K562 (cell line): ENCODE measurements at regions of chr11 and their contacts with region 1.

Region 1: DNA sequence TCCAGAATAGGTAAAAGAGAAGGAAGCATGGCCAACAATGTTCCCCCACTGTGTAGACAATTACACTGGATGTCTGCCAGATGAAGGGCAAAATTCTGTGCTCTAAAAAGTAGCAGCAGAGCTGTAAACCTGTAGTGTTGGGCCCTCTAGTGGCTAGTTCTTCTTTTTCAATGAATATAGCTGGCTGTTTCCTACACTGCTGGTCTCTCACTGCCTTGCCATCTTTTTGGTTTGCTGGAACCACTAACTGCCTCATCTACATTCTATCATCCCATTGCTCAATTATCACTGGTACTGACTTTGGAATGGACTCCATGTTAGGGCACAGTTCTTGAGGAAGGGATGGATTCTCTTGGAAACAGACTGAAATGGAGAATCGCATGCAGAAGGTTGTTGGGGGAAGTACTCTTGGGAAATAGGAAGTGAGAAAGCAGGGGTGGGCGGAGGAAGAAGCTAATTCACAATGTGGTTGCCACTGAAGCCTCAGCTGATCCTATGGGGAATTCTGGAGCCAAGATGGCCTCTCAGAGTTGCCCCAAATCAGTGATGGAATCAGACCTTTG is 17.9 kb downstream of the KCNE3 start:
- DNase-seq: peak; percentile 50 to 81 (median 58)
- ATAC-seq: peak; percentile 92
- H3K4me3 ChIP-seq: no peak overlapping the region
- H3K27ac ChIP-seq: no peak overlapping the region
- H3K4me1 ChIP-seq: no peaks in the 10 kb centered on the region; a peak in 2 of 5 replicates
- H3K27me3 ChIP-seq: no peaks in the 10 kb centered on the region; a peak in 3 of 5 replicates
- CTCF ChIP-seq: peak; percentile 75 to 93 (median 85)
- EP300 ChIP-seq: no peak
- POLR2A ChIP-seq: no peak
- RAD21 ChIP-seq: peak; percentile 86 to 94

Region 2: DNA sequence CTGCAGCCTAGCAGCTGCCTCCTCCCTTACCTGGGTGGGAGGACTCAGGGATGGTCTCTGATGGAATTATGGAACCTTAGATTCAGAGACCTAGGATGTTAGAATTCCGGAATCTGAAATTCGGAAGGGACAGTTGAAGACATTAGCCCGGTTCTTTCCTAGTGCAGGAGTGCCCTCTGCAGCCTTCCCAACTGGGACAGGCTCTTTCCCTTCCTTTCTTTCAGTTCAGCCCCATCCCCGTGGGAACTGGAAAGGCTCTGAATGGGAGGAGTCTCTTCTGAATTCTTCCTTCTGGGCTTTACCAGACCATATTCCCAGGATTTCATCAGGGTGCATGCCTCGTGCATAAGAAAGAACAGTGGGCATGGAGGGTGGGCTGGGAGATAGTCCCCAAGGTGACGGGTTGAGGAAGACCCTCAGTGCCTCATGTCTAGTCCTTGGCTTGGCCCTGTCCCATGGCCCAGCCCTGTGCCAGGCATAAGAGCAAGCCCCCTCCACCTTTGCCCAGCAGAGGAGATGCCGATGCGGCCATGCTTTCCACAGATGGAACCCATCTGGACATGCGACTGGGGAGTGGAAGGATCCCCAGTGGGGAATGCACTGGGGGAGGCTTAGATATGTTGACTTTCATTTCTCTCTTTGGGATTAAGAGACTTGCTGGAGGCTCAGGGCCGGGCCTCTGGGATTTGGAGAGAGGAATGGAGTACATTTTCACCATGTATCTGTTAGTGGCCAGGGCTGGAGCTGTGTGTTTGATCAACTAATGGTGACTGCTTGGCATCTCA is 484.2 kb before region 1 on chr11:
- CTCF ChIA-PET with region 1: interaction called, 5 read pairs
- POLR2A ChIA-PET with region 1: interaction called, 3 read pairs
- in situ Hi-C with region 1: loop called (anchors 10 kb)
- intact Hi-C with region 1: loop called (anchors 2 kb)
- DNase-seq: no peak
- ATAC-seq: no peak
- H3K4me3 ChIP-seq: no peak overlapping the region
- H3K27ac ChIP-seq: no peak overlapping the region
- H3K4me1 ChIP-seq: peaks cover 7 to 13% of the 10 kb centered on the region in 2 experiments; a peak in 3 of 5 replicates
- H3K27me3 ChIP-seq: no peaks in the 10 kb centered on the region; a peak in 1 of 5 replicates
- CTCF ChIP-seq: no peak
- EP300 ChIP-seq: no peak
- POLR2A ChIP-seq: no peak
- RAD21 ChIP-seq: no peak

Region 3: DNA sequence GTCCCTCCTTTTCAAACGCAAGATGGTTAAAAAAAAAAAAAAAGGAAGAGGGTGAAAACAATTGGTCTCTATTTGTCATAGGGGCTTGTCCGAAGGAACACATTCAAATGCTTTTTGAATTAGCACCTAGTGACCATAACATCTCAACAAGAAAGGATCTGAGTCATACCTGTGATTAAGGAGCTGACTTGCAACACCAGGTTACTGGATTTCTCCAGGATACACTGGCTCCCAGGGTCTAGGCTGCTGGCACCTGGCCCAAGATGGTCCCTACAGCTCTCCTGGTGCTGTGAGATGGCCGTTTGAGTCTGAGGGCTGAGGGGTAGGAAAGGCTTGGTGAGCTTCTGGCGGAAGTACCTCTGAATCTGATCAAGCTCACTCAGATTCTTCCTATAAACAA is 412.1 kb before region 1 on chr11:
- CTCF ChIA-PET with region 1: no interaction called
- POLR2A ChIA-PET with region 1: no interaction called
- in situ Hi-C with region 1: no loop called
- intact Hi-C with region 1: no loop called
- DNase-seq: no peak
- ATAC-seq: no peak
- H3K4me3 ChIP-seq: no peak overlapping the region
- H3K27ac ChIP-seq: no peak overlapping the region
- H3K4me1 ChIP-seq: no peaks in the 10 kb centered on the region
- H3K27me3 ChIP-seq: no peaks in the 10 kb centered on the region
- CTCF ChIP-seq: no peak
- EP300 ChIP-seq: no peak
- POLR2A ChIP-seq: no peak
- RAD21 ChIP-seq: no peak

Region 4: DNA sequence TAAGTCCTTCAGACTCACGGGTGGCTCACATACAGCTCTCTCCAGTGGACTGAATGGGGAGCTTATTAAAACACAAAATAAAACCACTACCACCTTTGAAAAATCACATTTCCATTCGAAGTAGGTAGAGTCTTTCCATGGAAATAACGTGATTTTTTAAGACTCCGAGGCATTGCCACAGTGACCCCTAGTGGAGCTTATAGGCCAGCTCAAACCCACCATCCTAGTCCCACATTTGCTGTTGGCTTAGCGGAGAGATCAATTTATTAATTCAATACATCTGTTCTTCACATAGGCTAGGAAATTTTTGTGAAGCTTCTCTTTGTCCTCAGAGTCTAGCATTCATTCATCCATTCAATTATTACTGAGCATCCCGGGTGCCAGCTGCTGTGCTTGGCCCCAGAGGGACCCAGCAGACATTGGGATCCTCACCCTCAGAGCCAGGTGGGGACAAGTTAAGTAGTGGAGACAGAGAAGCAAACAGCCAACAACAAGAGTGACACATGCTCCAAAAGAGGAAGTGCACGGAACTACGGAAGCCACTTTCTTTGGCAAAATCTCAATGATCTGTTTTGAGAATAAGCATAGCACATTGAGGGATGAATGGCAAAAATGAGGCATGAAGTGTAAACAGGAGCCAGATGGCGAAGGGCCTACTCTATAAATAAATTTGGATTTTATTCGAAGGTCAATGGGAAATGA is 127.8 kb before region 1 on chr11:
- CTCF ChIA-PET with region 1: no interaction called
- POLR2A ChIA-PET with region 1: no interaction called
- in situ Hi-C with region 1: loop called (anchors 10 kb)
- intact Hi-C with region 1: loop called (anchors 5 kb)
- DNase-seq: peak; percentile 30 to 59 (median 39)
- ATAC-seq: peak; percentile 74
- H3K4me3 ChIP-seq: no peak overlapping the region
- H3K27ac ChIP-seq: no peak overlapping the region
- H3K4me1 ChIP-seq: no peaks in the 10 kb centered on the region; a peak in 1 of 5 replicates
- H3K27me3 ChIP-seq: peaks cover 0 to 10% of the 10 kb centered on the region in 2 experiments; a peak in 1 of 5 replicates
- CTCF ChIP-seq: peak; percentile 61 to 75 (median 71); a peak in 5 of 6 replicates
- EP300 ChIP-seq: no peak
- POLR2A ChIP-seq: no peak
- RAD21 ChIP-seq: peak in 1 of 2 experiments; percentile 69; a peak in 3 of 4 replicates

Region 5: GRCh38 chr11:74487875-74488274 is 38.4 kb after region 1 on chr11:
- CTCF ChIA-PET with region 1: no interaction called
- POLR2A ChIA-PET with region 1: interaction called, 4 read pairs
- in situ Hi-C with region 1: no loop called
- intact Hi-C with region 1: loop called (anchors 5 kb)
- DNase-seq: peak in 2 of 4 experiments; percentile 45 to 61
- ATAC-seq: peak; percentile 88
- H3K4me3 ChIP-seq: no peak overlapping the region
- H3K27ac ChIP-seq: no peak overlapping the region
- H3K4me1 ChIP-seq: peaks cover 7 to 10% of the 10 kb centered on the region in 2 experiments; a peak in 4 of 5 replicates
- H3K27me3 ChIP-seq: no peaks in the 10 kb centered on the region
- CTCF ChIP-seq: peak; percentile 55 to 64 (median 62)
- EP300 ChIP-seq: no peak
- POLR2A ChIP-seq: no peak
- RAD21 ChIP-seq: peak; percentile 23 to 55; a peak in 3 of 4 replicates

Region 6: GRCh38 chr11:74650498-74650897 is 201.0 kb after region 1 on chr11:
- CTCF ChIA-PET with region 1: no interaction called
- POLR2A ChIA-PET with region 1: no interaction called
- in situ Hi-C with region 1: no loop called
- intact Hi-C with region 1: no loop called
- DNase-seq: no peak
- ATAC-seq: no peak
- H3K4me3 ChIP-seq: no peak overlapping the region
- H3K27ac ChIP-seq: no peak overlapping the region
- H3K4me1 ChIP-seq: peaks cover 0 to 3% of the 10 kb centered on the region in 2 experiments; a peak in 1 of 5 replicates
- H3K27me3 ChIP-seq: no peaks in the 10 kb centered on the region
- CTCF ChIP-seq: no peak
- EP300 ChIP-seq: no peak
- POLR2A ChIP-seq: no peak
- RAD21 ChIP-seq: no peak

Region 7: GRCh38 chr11:74739546-74740270 is 290.3 kb after region 1 on chr11:
- CTCF ChIA-PET with region 1: interaction called, 4 read pairs
- POLR2A ChIA-PET with region 1: no interaction called
- in situ Hi-C with region 1: no loop called
- intact Hi-C with region 1: loop called (anchors 10 kb)
- DNase-seq: peak; percentile 78 to 82 (median 79)
- ATAC-seq: peak; percentile 97
- H3K4me3 ChIP-seq: no peak overlapping the region
- H3K27ac ChIP-seq: no peak overlapping the region
- H3K4me1 ChIP-seq: no peaks in the 10 kb centered on the region
- H3K27me3 ChIP-seq: peaks cover 2 to 11% of the 10 kb centered on the region in 2 experiments; a peak in 2 of 5 replicates
- CTCF ChIP-seq: peak; percentile 89 to 94 (median 89)
- EP300 ChIP-seq: no peak
- POLR2A ChIP-seq: no peak
- RAD21 ChIP-seq: peak; percentile 56 to 74